ENCODE measurements at regions of chr10 and their contacts with region 1.

Region 1: DNA sequence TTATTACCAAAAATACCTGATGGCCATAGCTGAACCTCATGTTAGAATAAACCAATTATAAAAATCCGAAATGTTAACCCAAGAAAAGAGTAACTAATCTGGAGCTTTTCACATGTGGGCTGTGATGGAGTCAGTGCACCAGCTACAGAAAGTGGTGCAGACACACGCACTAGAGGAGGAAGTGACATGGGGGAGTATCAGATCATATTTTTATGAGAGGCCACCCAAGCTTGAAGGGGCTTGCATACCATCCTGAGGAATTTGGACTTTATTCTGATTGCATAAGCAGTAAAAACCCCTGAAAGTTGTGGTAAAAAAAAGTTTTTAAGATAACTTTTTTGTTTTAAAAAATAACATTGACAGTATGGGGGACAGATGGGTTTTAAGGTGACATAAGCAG is 1148.5 kb upstream of the CELF2 start:
- DNase-seq: no peak
- H3K4me3 ChIP-seq: no peak overlapping the region
- H3K27ac ChIP-seq: no peak overlapping the region
- H3K4me1 ChIP-seq: no peaks in the 10 kb centered on the region
- H3K27me3 ChIP-seq: no peaks in the 10 kb centered on the region
- CTCF ChIP-seq: no peak

Region 2: GRCh38 chr10:9819756-9820494 is 49.3 kb before region 1 on chr10:
- CTCF ChIA-PET with region 1: no interaction called
- dilution Hi-C with region 1: loop called (anchors 5 kb)
- in situ Hi-C with region 1: no loop called
- intact Hi-C with region 1: no loop called
- DNase-seq: no peak
- H3K4me3 ChIP-seq: no peak overlapping the region
- H3K27ac ChIP-seq: no peak overlapping the region
- H3K4me1 ChIP-seq: no peaks in the 10 kb centered on the region
- H3K27me3 ChIP-seq: no peaks in the 10 kb centered on the region
- CTCF ChIP-seq: no peak

Measured in mammary epithelial cell (primary cell).